ENCODE measurements at regions of chr6 and their contacts with region 1.

Region 1: GRCh38 chr6:107331409-107332386 is 127.7 kb downstream of the PDSS2 start:
- DNase-seq: no peak
- ATAC-seq: no peak
- H3K4me3 ChIP-seq: no peak overlapping the region
- H3K4me3 Mint-ChIP-seq: no peak overlapping the region
- H3K27ac ChIP-seq: no peak overlapping the region
- H3K27ac Mint-ChIP-seq: no peak overlapping the region
- H3K4me1 ChIP-seq: peaks cover 0 to 5% of the 10 kb centered on the region in 2 experiments
- H3K4me1 Mint-ChIP-seq: peaks cover 13 to 22% (median 16%) of the 10 kb centered on the region in 3 donors
- H3K27me3 ChIP-seq: no peaks in the 10 kb centered on the region
- H3K27me3 Mint-ChIP-seq: no peaks in the 10 kb centered on the region

Region 2: DNA sequence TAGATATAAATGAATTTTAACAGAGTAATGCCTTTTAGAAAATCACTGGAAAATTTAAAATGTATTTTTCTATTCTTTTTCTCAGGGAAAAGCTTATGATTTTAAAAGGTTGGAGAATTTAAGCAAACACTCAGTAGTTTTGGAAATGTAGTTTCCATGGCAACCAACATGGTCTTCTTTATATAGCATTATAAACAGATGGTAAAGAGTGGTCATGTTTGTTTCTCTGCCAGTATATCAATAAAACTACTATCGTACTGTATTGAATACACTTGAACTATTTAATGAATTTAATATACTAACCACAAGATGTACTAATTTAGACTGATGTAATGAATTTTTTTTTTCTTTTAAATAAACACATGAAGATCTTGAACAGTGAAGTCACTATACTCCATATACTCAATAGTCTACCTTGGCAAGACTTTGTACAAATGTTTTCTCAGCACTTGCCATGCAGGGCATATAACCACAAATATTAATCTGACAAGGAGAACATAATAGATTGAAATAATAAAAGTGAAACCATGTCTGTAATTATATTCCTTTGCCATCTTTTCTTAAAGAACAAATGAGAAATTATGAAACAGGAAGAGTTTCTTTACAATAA is 22.2 kb after region 1 on chr6:
- CTCF ChIA-PET with region 1: no interaction called
- POLR2A ChIA-PET with region 1: no interaction called
- DNase-seq: no peak
- ATAC-seq: no peak
- H3K4me3 ChIP-seq: no peak overlapping the region
- H3K4me3 Mint-ChIP-seq: no peak overlapping the region
- H3K27ac ChIP-seq: no peak overlapping the region
- H3K27ac Mint-ChIP-seq: no peak overlapping the region
- H3K4me1 ChIP-seq: no peaks in the 10 kb centered on the region
- H3K4me1 Mint-ChIP-seq: peaks cover 0 to 4% (median 0%) of the 10 kb centered on the region in 3 donors
- H3K27me3 ChIP-seq: no peaks in the 10 kb centered on the region
- H3K27me3 Mint-ChIP-seq: no peaks in the 10 kb centered on the region

Region 3: DNA sequence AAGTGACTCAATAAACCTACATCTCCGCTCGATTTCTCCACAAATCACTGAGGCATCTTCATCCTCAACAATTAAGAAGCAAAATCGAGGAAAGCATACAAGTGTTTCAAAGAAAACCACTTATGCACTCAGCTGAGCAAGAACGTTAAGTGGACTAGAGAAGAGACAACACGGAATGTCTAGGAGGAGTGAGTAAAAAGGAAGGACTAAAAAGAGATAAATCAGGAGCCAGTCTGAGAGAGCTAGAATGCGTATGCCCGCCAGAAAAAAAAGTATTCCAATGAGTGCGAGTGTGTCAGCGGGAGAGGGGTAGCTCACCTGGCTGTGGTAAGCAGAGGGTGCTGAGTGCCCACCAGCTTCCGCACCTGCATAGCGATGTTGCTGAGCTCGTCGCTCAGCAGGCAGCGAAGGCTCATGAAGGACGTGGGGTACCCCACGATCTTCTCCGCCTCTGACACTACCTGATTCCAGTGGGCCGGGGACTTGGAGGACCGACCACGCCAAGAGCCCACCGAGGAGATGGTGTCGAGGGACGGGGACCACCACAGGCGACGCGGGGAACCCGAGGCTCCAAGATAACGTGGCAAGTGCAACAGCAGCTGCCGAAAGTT is 127.1 kb after region 1 on chr6:
- CTCF ChIA-PET with region 1: no interaction called
- POLR2A ChIA-PET with region 1: interaction called in 1 of 2 experiments, 12 read pairs
- DNase-seq: peak in 26 of 35 experiments; percentile 0 to 46 (median 18)
- ATAC-seq: peak; percentile 29 to 39 (median 30)
- H3K4me3 ChIP-seq: peak overlapping the region; percentile 71 to 85
- H3K4me3 Mint-ChIP-seq: peak overlapping the region; percentile 94 to 97 (median 96)
- H3K27ac ChIP-seq: peak overlapping the region; percentile 76
- H3K27ac Mint-ChIP-seq: peak overlapping the region; percentile 95 to 96
- H3K4me1 ChIP-seq: peaks cover 7 to 15% of the 10 kb centered on the region in 2 experiments
- H3K4me1 Mint-ChIP-seq: peaks cover 26 to 33% (median 33%) of the 10 kb centered on the region in 3 donors
- H3K27me3 ChIP-seq: no peaks in the 10 kb centered on the region
- H3K27me3 Mint-ChIP-seq: no peaks in the 10 kb centered on the region